ENCODE measurements at regions of chr17 and their contacts with region 1.

Region 1: DNA sequence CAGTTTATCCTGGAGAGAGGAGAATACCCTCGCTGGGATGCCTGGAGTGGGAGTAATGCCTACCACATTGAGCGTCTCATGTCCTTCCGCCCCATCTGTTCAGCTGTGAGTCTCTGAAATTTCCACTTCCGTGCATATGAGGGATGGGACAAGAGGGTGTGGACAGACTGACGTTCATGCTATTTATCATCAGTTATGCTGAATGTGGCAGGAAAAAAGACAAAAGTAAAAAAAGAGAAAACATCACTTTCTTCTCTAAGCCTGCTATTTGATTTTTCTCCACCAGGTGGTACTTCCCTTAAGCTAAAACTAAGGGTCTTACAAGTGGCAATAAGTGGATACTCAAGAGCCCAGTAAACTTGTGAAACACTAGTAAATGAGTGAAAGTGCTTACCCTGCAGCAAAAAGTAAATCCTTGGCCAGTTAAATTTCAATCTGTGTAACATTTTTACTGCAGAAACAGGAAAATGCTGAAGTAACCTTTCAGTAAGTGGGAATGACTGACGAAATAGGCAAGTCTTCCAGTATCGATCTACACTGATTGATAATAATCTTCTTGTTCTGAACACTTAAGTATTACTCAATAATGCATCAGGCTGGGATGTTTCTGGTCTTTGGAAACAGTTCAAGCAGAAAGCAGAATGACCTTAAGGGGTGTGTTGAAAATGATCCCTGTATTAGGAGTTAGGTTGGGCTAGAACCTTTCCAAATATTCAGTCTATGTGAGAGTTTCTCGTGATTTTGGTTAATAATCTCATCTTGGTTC is 5.6 kb downstream of the CRYBA1 start:
- DNase-seq: peak; percentile 32
- H3K4me3 ChIP-seq: no peak overlapping the region
- H3K27ac ChIP-seq: no peak overlapping the region
- H3K4me1 ChIP-seq: peaks cover 0 to 29% of the 10 kb centered on the region in 2 experiments; a peak in 2 of 4 replicates
- H3K27me3 ChIP-seq: no peaks in the 10 kb centered on the region
- CTCF ChIP-seq: peak; percentile 67
- EP300 ChIP-seq: no peak
- RAD21 ChIP-seq: peak; percentile 25; the same call in 1 of the 2 replicates

Region 2: DNA sequence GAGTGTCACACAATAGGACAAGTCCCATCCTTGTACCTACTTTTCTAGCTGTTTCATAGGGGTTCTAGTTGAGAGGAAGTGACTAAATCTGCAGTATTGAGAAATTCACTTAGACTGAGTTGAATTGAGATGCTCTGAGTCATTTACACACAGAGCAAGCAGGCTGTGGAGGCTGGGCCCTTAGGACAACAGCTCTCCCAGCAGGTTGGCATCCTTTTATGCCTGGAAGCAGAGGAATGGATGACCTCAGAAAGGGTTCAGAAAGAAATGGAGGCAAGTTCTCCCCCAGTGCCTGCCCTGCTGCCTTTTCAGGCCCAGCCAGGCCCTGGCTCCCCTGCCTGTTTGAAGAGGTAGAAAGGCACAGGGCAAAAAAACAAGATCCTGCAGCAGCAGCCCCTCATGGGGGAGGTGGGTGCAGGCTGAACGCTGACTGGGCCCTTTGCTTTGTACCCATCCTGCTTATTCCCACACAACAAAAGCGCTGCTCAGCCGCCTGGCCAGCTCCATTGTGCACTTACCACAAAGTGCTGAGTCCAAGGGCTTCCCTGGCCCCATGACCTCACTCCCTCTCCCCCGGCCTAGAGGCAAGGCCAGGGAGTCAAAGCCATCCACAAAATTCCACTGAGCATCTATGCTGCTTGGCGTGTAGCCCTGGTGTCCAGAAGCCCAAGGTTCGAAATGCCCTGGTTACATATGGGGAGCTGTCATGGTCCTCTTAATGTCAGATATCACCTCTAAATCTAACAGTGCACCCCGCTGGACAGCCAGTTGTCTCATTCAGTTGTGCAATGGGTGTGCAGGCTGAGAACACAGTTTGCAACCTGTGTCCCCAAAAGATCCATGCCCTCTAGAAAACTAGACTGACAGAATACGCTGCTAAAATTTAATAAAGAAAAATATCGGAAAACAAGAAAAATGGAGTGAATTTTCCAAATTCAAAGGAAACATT is 11.0 kb before region 1 on chr17:
- CTCF ChIA-PET with region 1: interaction called, 13 read pairs
- POLR2A ChIA-PET with region 1: interaction called, 3 read pairs
- DNase-seq: peak; percentile 39
- H3K4me3 ChIP-seq: no peak overlapping the region
- H3K27ac ChIP-seq: peak overlapping the region; percentile 80 to 93
- H3K4me1 ChIP-seq: peaks cover 23 to 28% of the 10 kb centered on the region in 2 experiments
- H3K27me3 ChIP-seq: no peaks in the 10 kb centered on the region
- CTCF ChIP-seq: peak; percentile 26
- EP300 ChIP-seq: peak in 1 of 2 experiments; percentile 72; a peak in 2 of 4 replicates
- RAD21 ChIP-seq: peak; percentile 31